Caco-2 (cell line): ENCODE measurements at regions of chr2 and their contacts with region 1.

Region 1: GRCh38 chr2:177724398-177725287 is 332.1 kb downstream of the AGPS start:
- DNase-seq: peak; percentile 45 to 63
- H3K4me3 ChIP-seq: no peak overlapping the region
- H3K4me3 Mint-ChIP-seq: no peak overlapping the region
- H3K27ac Mint-ChIP-seq: no peak overlapping the region
- H3K4me1 ChIP-seq: no peaks in the 10 kb centered on the region
- H3K4me1 Mint-ChIP-seq: no peaks in the 10 kb centered on the region
- H3K27me3 ChIP-seq: no peaks in the 10 kb centered on the region
- H3K27me3 Mint-ChIP-seq: peaks cover 2% of the 10 kb centered on the region
- CTCF ChIP-seq: peak; percentile 92 to 96

Region 2: GRCh38 chr2:177419274-177419673 is 305.4 kb before region 1 on chr2:
- CTCF ChIA-PET with region 1: no interaction called
- POLR2A ChIA-PET with region 1: no interaction called
- intact Hi-C with region 1: loop called (anchors 10 kb)
- DNase-seq: no peak
- H3K4me3 ChIP-seq: no peak overlapping the region
- H3K4me3 Mint-ChIP-seq: no peak overlapping the region
- H3K27ac Mint-ChIP-seq: peak overlapping the region; percentile 53
- H3K4me1 ChIP-seq: peaks cover 34% of the 10 kb centered on the region
- H3K4me1 Mint-ChIP-seq: peaks cover 29% of the 10 kb centered on the region
- H3K27me3 ChIP-seq: no peaks in the 10 kb centered on the region
- H3K27me3 Mint-ChIP-seq: no peaks in the 10 kb centered on the region
- CTCF ChIP-seq: no peak

Region 3: GRCh38 chr2:177489719-177490301 is 234.8 kb before region 1 on chr2:
- CTCF ChIA-PET with region 1: interaction called, 4 read pairs
- POLR2A ChIA-PET with region 1: no interaction called
- intact Hi-C with region 1: loop called (anchors 1 kb)
- DNase-seq: peak in 1 of 2 experiments; percentile 40
- H3K4me3 ChIP-seq: no peak overlapping the region
- H3K4me3 Mint-ChIP-seq: no peak overlapping the region
- H3K27ac Mint-ChIP-seq: no peak overlapping the region
- H3K4me1 ChIP-seq: 0 out of 2 replicates have a peak, but pooled peaks cover 3% of the 10 kb centered on the region
- H3K4me1 Mint-ChIP-seq: no peaks in the 10 kb centered on the region
- H3K27me3 ChIP-seq: no peaks in the 10 kb centered on the region
- H3K27me3 Mint-ChIP-seq: no peaks in the 10 kb centered on the region
- CTCF ChIP-seq: peak; percentile 60 to 69

Region 4: GRCh38 chr2:177538323-177538722 is 186.3 kb before region 1 on chr2:
- CTCF ChIA-PET with region 1: no interaction called
- POLR2A ChIA-PET with region 1: no interaction called
- intact Hi-C with region 1: loop called (anchors 5 kb)
- DNase-seq: no peak
- H3K4me3 ChIP-seq: no peak overlapping the region
- H3K4me3 Mint-ChIP-seq: no peak overlapping the region
- H3K27ac Mint-ChIP-seq: no peak overlapping the region
- H3K4me1 ChIP-seq: 0 out of 2 replicates have a peak, but pooled peaks cover 12% of the 10 kb centered on the region
- H3K4me1 Mint-ChIP-seq: no peaks in the 10 kb centered on the region
- H3K27me3 ChIP-seq: no peaks in the 10 kb centered on the region
- H3K27me3 Mint-ChIP-seq: no peaks in the 10 kb centered on the region
- CTCF ChIP-seq: no peak

Region 5: DNA sequence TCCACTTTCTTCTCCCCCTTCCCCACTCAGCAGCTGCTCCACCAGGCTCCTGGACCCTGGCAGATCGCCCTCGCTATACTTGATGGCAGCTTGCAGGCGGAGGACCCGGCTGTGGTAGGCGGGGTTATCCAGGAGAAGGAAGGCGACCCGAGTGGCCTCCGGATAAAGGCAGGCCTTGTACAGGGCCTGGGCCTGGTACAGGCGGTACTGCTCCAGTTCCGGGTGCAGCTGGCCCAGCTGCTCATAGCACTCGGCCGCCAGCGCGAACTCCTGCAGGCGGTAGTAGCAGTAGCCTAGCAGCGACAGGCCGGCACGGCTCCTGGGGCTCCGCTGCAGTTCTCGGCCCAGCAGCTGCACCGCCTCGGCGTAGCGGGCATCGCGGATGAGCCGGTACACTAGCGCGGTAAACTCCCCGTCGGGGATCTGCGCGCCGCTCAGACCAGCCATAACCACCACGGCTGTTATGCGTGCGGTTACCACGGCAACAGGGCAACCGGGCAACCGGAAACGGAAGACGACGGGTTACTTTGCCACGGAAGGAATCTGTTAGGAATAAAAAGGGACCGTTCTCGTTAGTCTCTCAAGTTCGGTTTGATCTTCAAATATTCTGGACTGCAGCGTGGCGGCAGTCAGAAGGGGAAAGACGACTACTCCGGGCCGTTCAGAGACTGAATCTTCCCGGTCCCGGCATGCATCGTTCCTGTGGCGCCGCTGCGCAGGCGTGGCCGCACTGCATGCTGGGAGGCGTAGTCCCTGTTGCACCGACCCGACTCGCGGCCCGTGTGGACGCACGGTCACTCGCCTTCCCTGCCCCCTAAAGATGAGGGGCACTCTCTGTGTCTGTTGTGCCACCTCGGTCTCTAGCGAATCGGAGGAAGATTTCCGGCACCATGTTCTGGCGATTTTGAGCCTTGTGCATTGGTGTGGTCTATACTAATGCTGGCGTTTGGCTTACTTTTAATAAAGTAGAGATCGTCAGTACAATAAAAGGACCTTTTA is 106.1 kb before region 1 on chr2:
- CTCF ChIA-PET with region 1: no interaction called
- POLR2A ChIA-PET with region 1: no interaction called
- intact Hi-C with region 1: loop called (anchors 1 kb)
- DNase-seq: peak; percentile 89 to 91
- H3K4me3 ChIP-seq: peak overlapping the region; percentile 64
- H3K4me3 Mint-ChIP-seq: peak overlapping the region; percentile 90
- H3K27ac Mint-ChIP-seq: peak overlapping the region; percentile 99
- H3K4me1 ChIP-seq: no peaks in the 10 kb centered on the region
- H3K4me1 Mint-ChIP-seq: no peaks in the 10 kb centered on the region
- H3K27me3 ChIP-seq: no peaks in the 10 kb centered on the region
- H3K27me3 Mint-ChIP-seq: peaks cover 2% of the 10 kb centered on the region
- CTCF ChIP-seq: no peak

Region 6: GRCh38 chr2:177758591-177759371 is 34.1 kb after region 1 on chr2:
- CTCF ChIA-PET with region 1: no interaction called
- POLR2A ChIA-PET with region 1: no interaction called
- intact Hi-C with region 1: loop called (anchors 2 kb)
- DNase-seq: peak in 1 of 2 experiments; percentile 60
- H3K4me3 ChIP-seq: no peak overlapping the region
- H3K4me3 Mint-ChIP-seq: no peak overlapping the region
- H3K27ac Mint-ChIP-seq: no peak overlapping the region
- H3K4me1 ChIP-seq: peaks cover 12% of the 10 kb centered on the region
- H3K4me1 Mint-ChIP-seq: peaks cover 9% of the 10 kb centered on the region
- H3K27me3 ChIP-seq: no peaks in the 10 kb centered on the region; the same call in 1 of the 2 replicates
- H3K27me3 Mint-ChIP-seq: peaks cover 12% of the 10 kb centered on the region
- CTCF ChIP-seq: peak; percentile 54 to 65

Region 7: DNA sequence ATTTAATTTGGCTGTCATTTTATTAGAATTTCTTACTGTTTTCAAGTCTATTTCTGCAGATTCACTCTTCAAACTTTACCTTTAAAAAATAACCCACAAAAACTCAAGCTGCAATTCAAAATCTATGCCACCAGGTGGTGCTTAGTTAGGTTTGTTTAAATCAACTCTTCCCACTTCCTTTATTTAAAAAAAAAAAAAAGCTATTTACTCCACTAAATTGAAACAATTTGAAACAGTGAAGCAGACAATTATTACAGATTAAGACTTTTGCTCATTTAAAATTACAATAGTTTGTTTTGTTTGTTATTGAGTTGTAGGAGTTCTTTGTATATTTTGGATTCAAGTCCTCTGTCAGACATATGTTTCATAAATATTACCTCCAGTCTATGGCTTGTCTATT is 47.9 kb after region 1 on chr2:
- CTCF ChIA-PET with region 1: no interaction called
- POLR2A ChIA-PET with region 1: no interaction called
- intact Hi-C with region 1: no loop called
- DNase-seq: peak in 1 of 2 experiments; percentile 33
- H3K4me3 ChIP-seq: no peak overlapping the region
- H3K4me3 Mint-ChIP-seq: no peak overlapping the region
- H3K27ac Mint-ChIP-seq: no peak overlapping the region
- H3K4me1 ChIP-seq: no peaks in the 10 kb centered on the region
- H3K4me1 Mint-ChIP-seq: no peaks in the 10 kb centered on the region
- H3K27me3 ChIP-seq: no peaks in the 10 kb centered on the region
- H3K27me3 Mint-ChIP-seq: peaks cover 4% of the 10 kb centered on the region
- CTCF ChIP-seq: peak; percentile 51 to 60